ENCODE measurements at regions of chr5 and their contacts with region 1.

Region 1: GRCh38 chr5:179795863-179796833 is 2.4 kb downstream of the LTC4S start:
- DNase-seq: peak; percentile 83
- H3K4me3 ChIP-seq: peak overlapping the region; percentile 70
- H3K27ac ChIP-seq: no peak overlapping the region
- H3K4me1 ChIP-seq: peaks cover 37% of the 10 kb centered on the region
- CTCF ChIP-seq: peak; percentile 73

Region 2: GRCh38 chr5:179763215-179763945 is 32.8 kb before region 1 on chr5:
- CTCF ChIA-PET with region 1: no interaction called
- POLR2A ChIA-PET with region 1: no interaction called
- intact Hi-C with region 1: loop called (anchors 1 kb)
- DNase-seq: peak; percentile 69
- H3K4me3 ChIP-seq: no peak overlapping the region
- H3K27ac ChIP-seq: no peak overlapping the region
- H3K4me1 ChIP-seq: peaks cover 17% of the 10 kb centered on the region
- CTCF ChIP-seq: peak; percentile 99

Region 3: GRCh38 chr5:179967489-179967888 is 171.3 kb after region 1 on chr5:
- CTCF ChIA-PET with region 1: no interaction called
- POLR2A ChIA-PET with region 1: no interaction called
- intact Hi-C with region 1: no loop called
- DNase-seq: no peak
- H3K4me3 ChIP-seq: no peak overlapping the region
- H3K27ac ChIP-seq: no peak overlapping the region
- H3K4me1 ChIP-seq: peaks cover 31% of the 10 kb centered on the region
- CTCF ChIP-seq: no peak